IMR-90 (cell line): ENCODE measurements at regions of chr13 and their contacts with region 1.

Region 1: GRCh38 chr13:48975856-48976575 is at the start of gene FNDC3A:
- DNase-seq: peak; percentile 75
- ATAC-seq: peak; percentile 85
- H3K4me3 ChIP-seq: peak within 1 kb of the TSS; percentile 99
- H3K27ac ChIP-seq: peak within 1 kb of the TSS; percentile 97
- H3K4me1 ChIP-seq: peaks cover 9% of the 10 kb centered on the region; the same call in 1 of the 2 replicates
- H3K27me3 ChIP-seq: no peaks in the 10 kb centered on the region
- CTCF ChIP-seq: no peak
- POLR2A ChIP-seq: peak; percentile 65
- RAD21 ChIP-seq: no peak
- total RNA-seq, gene FNDC3A: 60.4 and 72.8 TPM in 2 replicates

Region 2: GRCh38 chr13:48990900-48991299 is 14.9 kb after region 1 on chr13:
- CTCF ChIA-PET with region 1: no interaction called
- POLR2A ChIA-PET with region 1: no interaction called
- dilution Hi-C with region 1: no loop called
- in situ Hi-C with region 1: no loop called
- intact Hi-C with region 1: no loop called
- DNase-seq: no peak
- ATAC-seq: no peak
- H3K4me3 ChIP-seq: no peak overlapping the region
- H3K27ac ChIP-seq: no peak overlapping the region
- H3K4me1 ChIP-seq: peaks cover 5% of the 10 kb centered on the region
- H3K27me3 ChIP-seq: no peaks in the 10 kb centered on the region
- CTCF ChIP-seq: no peak
- POLR2A ChIP-seq: no peak
- RAD21 ChIP-seq: no peak

Region 3: GRCh38 chr13:49066856-49067255 is 90.8 kb after region 1 on chr13:
- CTCF ChIA-PET with region 1: no interaction called
- POLR2A ChIA-PET with region 1: no interaction called
- dilution Hi-C with region 1: no loop called
- in situ Hi-C with region 1: no loop called
- intact Hi-C with region 1: loop called (anchors 5 kb)
- DNase-seq: no peak
- ATAC-seq: no peak
- H3K4me3 ChIP-seq: no peak overlapping the region
- H3K27ac ChIP-seq: no peak overlapping the region
- H3K4me1 ChIP-seq: peaks cover 3% of the 10 kb centered on the region; the same call in 1 of the 2 replicates
- H3K27me3 ChIP-seq: no peaks in the 10 kb centered on the region
- CTCF ChIP-seq: no peak
- POLR2A ChIP-seq: no peak
- RAD21 ChIP-seq: no peak

Region 4: DNA sequence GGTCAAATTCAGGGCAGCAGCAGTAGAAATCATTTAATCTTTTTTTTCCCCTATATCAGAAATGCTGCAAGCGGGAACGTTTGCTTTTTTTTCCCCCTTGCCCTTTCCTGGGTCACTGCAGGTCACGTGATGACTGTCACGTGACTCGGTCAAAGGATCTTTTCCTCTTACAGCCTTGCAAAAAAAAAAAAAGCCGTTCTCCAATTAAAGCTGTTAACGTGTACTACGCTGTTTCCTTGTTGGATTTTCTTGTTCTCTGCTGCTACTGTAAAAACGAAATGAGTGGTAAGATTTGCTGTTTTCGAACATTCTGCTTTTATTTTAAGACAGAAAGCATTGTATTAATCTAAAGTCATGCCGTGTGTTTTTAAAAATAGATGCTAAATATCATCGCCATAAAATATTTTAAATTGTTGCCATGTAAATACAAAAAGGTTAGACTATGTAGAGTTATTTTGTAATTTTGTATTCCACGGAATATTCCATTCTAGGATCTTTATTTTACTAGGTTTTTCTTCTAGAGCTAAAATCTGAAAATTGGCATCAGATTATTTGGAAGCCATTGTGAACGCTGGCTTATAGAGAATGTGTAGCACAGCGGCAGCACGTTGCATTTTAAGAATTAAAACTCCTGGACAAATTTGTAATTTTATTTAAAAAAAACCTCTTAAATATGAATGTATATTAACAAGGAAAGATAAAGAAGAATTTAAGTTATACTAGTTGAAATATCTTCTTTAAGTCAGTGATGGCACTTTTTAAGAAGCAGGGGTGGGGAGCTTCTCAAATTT is 134.3 kb after region 1 on chr13:
- CTCF ChIA-PET with region 1: no interaction called
- POLR2A ChIA-PET with region 1: no interaction called
- dilution Hi-C with region 1: no loop called
- in situ Hi-C with region 1: no loop called
- intact Hi-C with region 1: loop called (anchors 2 kb)
- DNase-seq: peak; percentile 91
- ATAC-seq: peak; percentile 75
- H3K4me3 ChIP-seq: peak overlapping the region; percentile 84
- H3K27ac ChIP-seq: peak overlapping the region; percentile 75; the same call in 1 of the 2 replicates
- H3K4me1 ChIP-seq: peaks cover 3% of the 10 kb centered on the region
- H3K27me3 ChIP-seq: no peaks in the 10 kb centered on the region
- CTCF ChIP-seq: no peak
- POLR2A ChIP-seq: no peak
- RAD21 ChIP-seq: no peak

Region 5: DNA sequence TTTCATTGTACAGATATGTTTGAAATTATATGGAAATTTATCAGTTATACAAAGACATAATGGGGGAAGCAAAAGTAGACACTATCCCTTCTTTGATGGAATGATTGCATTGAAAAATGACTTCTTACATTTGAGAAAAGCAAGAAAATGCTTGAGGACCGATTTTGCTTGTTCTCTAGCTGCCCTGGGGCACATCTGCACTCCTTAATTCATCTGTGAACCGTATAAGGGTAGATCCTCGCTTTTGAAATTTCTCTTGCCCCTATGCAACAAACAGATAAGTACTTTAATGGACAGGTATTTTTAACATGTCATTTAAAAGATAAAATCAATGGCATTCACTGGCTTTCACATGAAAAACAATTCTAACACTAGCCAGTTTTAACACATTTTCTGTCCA is 230.6 kb after region 1 on chr13:
- CTCF ChIA-PET with region 1: no interaction called
- POLR2A ChIA-PET with region 1: no interaction called
- dilution Hi-C with region 1: no loop called
- in situ Hi-C with region 1: no loop called
- intact Hi-C with region 1: loop called (anchors 10 kb)
- DNase-seq: no peak
- ATAC-seq: no peak
- H3K4me3 ChIP-seq: no peak overlapping the region
- H3K27ac ChIP-seq: no peak overlapping the region
- H3K4me1 ChIP-seq: no peaks in the 10 kb centered on the region
- H3K27me3 ChIP-seq: no peaks in the 10 kb centered on the region
- CTCF ChIP-seq: no peak
- POLR2A ChIP-seq: no peak
- RAD21 ChIP-seq: no peak

Region 6: GRCh38 chr13:49265822-49266221 is 289.8 kb after region 1 on chr13:
- CTCF ChIA-PET with region 1: no interaction called
- POLR2A ChIA-PET with region 1: no interaction called
- dilution Hi-C with region 1: no loop called
- in situ Hi-C with region 1: no loop called
- intact Hi-C with region 1: loop called (anchors 10 kb)
- DNase-seq: peak; percentile 77
- ATAC-seq: peak; percentile 72; the same call in 1 of the 2 replicates
- H3K4me3 ChIP-seq: no peak overlapping the region
- H3K27ac ChIP-seq: no peak overlapping the region
- H3K4me1 ChIP-seq: no peaks in the 10 kb centered on the region; the same call in 1 of the 2 replicates
- H3K27me3 ChIP-seq: no peaks in the 10 kb centered on the region
- CTCF ChIP-seq: no peak
- POLR2A ChIP-seq: no peak
- RAD21 ChIP-seq: no peak

Region 7: GRCh38 chr13:49858183-49858856 is 882.3 kb after region 1 on chr13:
- CTCF ChIA-PET with region 1: no interaction called
- POLR2A ChIA-PET with region 1: no interaction called
- dilution Hi-C with region 1: no loop called
- in situ Hi-C with region 1: no loop called
- intact Hi-C with region 1: no loop called
- DNase-seq: peak; percentile 99
- ATAC-seq: peak; percentile 92
- H3K4me3 ChIP-seq: no peak overlapping the region
- H3K27ac ChIP-seq: peak overlapping the region; percentile 92
- H3K4me1 ChIP-seq: peaks cover 6% of the 10 kb centered on the region
- H3K27me3 ChIP-seq: no peaks in the 10 kb centered on the region
- CTCF ChIP-seq: no peak
- POLR2A ChIP-seq: no peak
- RAD21 ChIP-seq: no peak; the same call in 1 of the 2 replicates